K562 (cell line): ENCODE measurements at regions of chr6 and their contacts with region 1.

Region 1: GRCh38 chr6:127266178-127266891 is at the start of gene RNF146:
- DNase-seq: peak; percentile 87 to 90 (median 88)
- ATAC-seq: peak; percentile 87
- H3K4me3 ChIP-seq: peak within 1 kb of the TSS; percentile 78
- H3K27ac ChIP-seq: peak within 1 kb of the TSS; percentile 88
- H3K4me1 ChIP-seq: peaks cover 0 to 8% of the 10 kb centered on the region in 2 experiments; a peak in 4 of 5 replicates
- H3K27me3 ChIP-seq: no peaks in the 10 kb centered on the region
- CTCF ChIP-seq: peak; percentile 76 to 81 (median 80)
- EP300 ChIP-seq: no peak
- POLR2A ChIP-seq: no peak
- RAD21 ChIP-seq: peak; percentile 6 to 50; a peak in 2 of 4 replicates
- polyA plus RNA-seq, gene RNF146: 8.4 to 14.7 TPM

Region 2: DNA sequence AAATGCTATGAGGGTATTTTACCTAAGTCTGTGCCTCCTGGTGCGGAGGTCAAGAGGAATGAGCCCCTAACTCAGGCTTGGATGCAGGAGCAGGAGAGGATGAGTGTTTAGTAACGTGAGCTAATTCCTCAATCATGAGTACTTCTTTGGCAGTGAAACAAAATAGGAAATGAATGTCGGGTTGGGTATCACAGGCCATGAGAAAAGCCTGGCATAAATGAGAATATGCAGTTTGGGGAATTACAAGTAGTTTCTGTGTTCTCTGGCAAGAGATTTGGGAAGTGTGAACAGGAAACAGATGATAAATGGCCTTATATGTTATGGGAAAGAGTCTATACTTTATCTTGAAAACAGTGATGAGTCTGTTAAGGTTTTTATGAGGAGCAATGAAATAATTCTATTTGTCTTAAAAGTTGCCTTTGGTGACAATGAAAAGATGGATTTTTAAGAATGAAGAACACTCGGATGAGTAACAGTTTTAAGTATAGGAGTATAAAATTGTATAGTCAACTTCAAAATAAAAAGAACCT is 58.7 kb before region 1 on chr6:
- CTCF ChIA-PET with region 1: no interaction called
- POLR2A ChIA-PET with region 1: no interaction called
- in situ Hi-C with region 1: no loop called
- intact Hi-C with region 1: no loop called
- DNase-seq: no peak
- ATAC-seq: no peak
- H3K4me3 ChIP-seq: no peak overlapping the region
- H3K27ac ChIP-seq: no peak overlapping the region
- H3K4me1 ChIP-seq: no peaks in the 10 kb centered on the region
- H3K27me3 ChIP-seq: no peaks in the 10 kb centered on the region
- CTCF ChIP-seq: no peak
- EP300 ChIP-seq: no peak
- POLR2A ChIP-seq: no peak
- RAD21 ChIP-seq: no peak

Region 3: GRCh38 chr6:127255286-127255685 is 11.0 kb before region 1 on chr6:
- CTCF ChIA-PET with region 1: no interaction called
- POLR2A ChIA-PET with region 1: interaction called, 10 read pairs
- in situ Hi-C with region 1: no loop called
- intact Hi-C with region 1: no loop called
- DNase-seq: no peak
- ATAC-seq: no peak
- H3K4me3 ChIP-seq: no peak overlapping the region
- H3K27ac ChIP-seq: no peak overlapping the region
- H3K4me1 ChIP-seq: no peaks in the 10 kb centered on the region; a peak in 1 of 5 replicates
- H3K27me3 ChIP-seq: peaks cover 0 to 9% of the 10 kb centered on the region in 2 experiments; a peak in 2 of 5 replicates
- CTCF ChIP-seq: no peak
- EP300 ChIP-seq: no peak
- POLR2A ChIP-seq: no peak
- RAD21 ChIP-seq: no peak

Region 4: DNA sequence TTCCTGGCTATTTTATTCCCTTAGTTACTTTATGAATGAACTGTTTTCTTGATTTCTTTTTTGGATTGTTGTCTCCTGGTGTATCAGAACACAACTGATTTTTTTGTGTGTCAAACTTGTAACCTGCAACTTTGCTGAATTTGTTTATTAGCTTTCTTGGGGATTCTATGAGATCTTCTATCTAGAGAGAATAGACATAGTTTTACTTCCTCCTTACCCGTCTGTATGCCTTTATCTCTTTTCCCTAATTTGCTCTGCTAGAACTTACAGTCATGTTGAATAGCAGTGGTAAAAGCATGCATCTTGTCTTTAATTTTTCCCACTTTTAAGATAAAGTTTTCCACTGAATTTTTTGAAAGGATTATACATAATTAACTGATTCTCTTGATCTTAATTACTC is 13.5 kb after region 1 on chr6:
- CTCF ChIA-PET with region 1: interaction called, 3 read pairs
- POLR2A ChIA-PET with region 1: interaction called, 14 read pairs
- in situ Hi-C with region 1: no loop called
- intact Hi-C with region 1: no loop called
- DNase-seq: no peak
- ATAC-seq: no peak
- H3K4me3 ChIP-seq: no peak overlapping the region
- H3K27ac ChIP-seq: no peak overlapping the region
- H3K4me1 ChIP-seq: peaks cover 4 to 10% of the 10 kb centered on the region in 2 experiments; a peak in 3 of 5 replicates
- H3K27me3 ChIP-seq: no peaks in the 10 kb centered on the region
- CTCF ChIP-seq: no peak
- EP300 ChIP-seq: no peak
- POLR2A ChIP-seq: no peak
- RAD21 ChIP-seq: no peak

Region 5: DNA sequence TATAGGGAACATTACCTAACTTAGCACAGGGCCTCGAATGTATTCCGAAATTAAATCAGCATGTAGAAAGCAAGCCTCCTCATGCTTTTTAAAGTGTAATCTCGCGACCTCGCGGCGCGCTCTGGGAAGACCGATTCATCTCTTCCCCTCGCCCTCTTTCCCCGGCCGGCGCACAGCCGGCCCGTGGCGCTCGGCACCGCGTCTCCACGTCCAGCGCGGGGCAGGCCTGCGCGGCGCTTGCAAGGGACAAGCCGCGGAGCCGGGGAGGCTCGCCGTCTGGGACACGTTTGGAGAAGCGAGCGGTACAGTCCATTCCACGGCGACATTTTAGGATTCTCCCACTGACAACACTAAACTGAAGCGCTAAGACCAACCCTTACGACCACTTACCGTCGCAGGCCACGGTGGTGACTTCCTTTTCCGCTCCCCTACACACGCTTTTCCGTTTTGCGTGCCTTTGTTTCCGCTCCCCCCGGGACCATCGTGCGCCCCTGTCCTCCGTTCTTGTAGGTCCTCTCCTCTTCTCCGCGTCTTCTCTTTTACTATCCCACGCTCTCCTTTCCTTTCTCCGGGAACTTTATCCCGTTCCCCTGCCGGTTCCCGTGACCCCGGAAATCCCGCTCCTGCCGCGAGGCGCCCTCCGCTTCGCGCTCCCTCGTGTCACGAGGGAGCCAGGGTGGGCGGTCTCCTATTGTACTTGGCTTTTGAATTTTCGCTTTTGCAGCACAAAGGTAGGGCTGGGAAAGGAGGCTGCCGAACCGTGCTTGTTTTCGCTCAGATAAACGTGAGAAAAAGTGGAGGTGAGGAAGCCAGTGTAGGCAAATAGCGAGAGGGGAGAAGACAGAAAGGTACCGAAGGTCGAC is 76.8 kb after region 1 on chr6 and contains the start of gene ECHDC1:
- CTCF ChIA-PET with region 1: no interaction called
- POLR2A ChIA-PET with region 1: interaction called, 4 read pairs
- in situ Hi-C with region 1: no loop called
- intact Hi-C with region 1: loop called (anchors 2 kb)
- DNase-seq: peak; percentile 58 to 88 (median 68)
- ATAC-seq: peak; percentile 86
- H3K4me3 ChIP-seq: peak within 1 kb of the TSS; percentile 77
- H3K27ac ChIP-seq: peak within 1 kb of the TSS; percentile 91
- H3K4me1 ChIP-seq: peaks cover 3 to 14% of the 10 kb centered on the region in 2 experiments; a peak in 3 of 5 replicates
- H3K27me3 ChIP-seq: no peaks in the 10 kb centered on the region
- CTCF ChIP-seq: 0 out of 6 replicates have a peak, but pooled peaks of 1 of the 3 experiments have one; percentile 10
- EP300 ChIP-seq: no peak; the same call in 1 of the 2 replicates
- POLR2A ChIP-seq: peak; percentile 92
- RAD21 ChIP-seq: no peak
- polyA plus RNA-seq, gene ECHDC1: 96.5 to 103 TPM